Mammary epithelial cell (primary cell): ENCODE measurements at regions of chr4 and their contacts with region 1.

Region 1: GRCh38 chr4:112636688-112637551 is at the starts of genes LARP7 and ZGRF1:
- DNase-seq: peak; percentile 99
- H3K4me3 ChIP-seq: peak within 1 kb of the TSS; percentile 82 to 99 (median 97)
- H3K27ac ChIP-seq: peak within 1 kb of the TSS; percentile 91
- H3K4me1 ChIP-seq: peaks cover 8% of the 10 kb centered on the region
- H3K27me3 ChIP-seq: no peaks in the 10 kb centered on the region
- CTCF ChIP-seq: peak; percentile 77 to 93
- total RNA-seq, gene LARP7: 16.8 to 34.9 TPM
- total RNA-seq, gene ZGRF1: 3.3 to 10.3 TPM

Region 2: DNA sequence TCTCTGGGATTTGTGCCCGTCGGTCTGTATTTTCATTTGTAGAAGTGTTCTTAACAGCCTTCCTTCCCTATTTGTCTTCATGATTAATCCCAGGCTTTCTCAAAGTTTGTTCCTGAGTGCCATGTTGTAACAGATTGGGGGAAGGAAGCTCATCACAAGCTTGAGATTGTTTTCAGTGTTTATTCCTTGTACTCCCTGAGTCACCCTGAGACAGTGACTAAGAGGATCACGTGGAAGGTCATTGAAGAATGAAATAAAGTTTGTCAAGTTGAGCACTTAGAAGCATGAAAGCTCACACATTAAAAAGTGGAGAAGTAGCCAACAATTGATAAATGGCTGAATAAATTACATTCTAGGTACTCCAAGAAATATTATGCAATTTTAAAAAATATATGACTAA is 645.1 kb before region 1 on chr4:
- CTCF ChIA-PET with region 1: no interaction called
- dilution Hi-C with region 1: no loop called
- in situ Hi-C with region 1: no loop called
- intact Hi-C with region 1: no loop called
- DNase-seq: peak; percentile 81
- H3K4me3 ChIP-seq: no peak overlapping the region
- H3K27ac ChIP-seq: peak overlapping the region; percentile 5
- H3K4me1 ChIP-seq: peaks cover 11% of the 10 kb centered on the region
- H3K27me3 ChIP-seq: peaks cover 6% of the 10 kb centered on the region
- CTCF ChIP-seq: no peak

Region 3: GRCh38 chr4:112585977-112586736 is 50.8 kb before region 1 on chr4:
- CTCF ChIA-PET with region 1: no interaction called
- dilution Hi-C with region 1: no loop called
- in situ Hi-C with region 1: no loop called
- intact Hi-C with region 1: no loop called
- DNase-seq: no peak
- H3K4me3 ChIP-seq: no peak overlapping the region
- H3K27ac ChIP-seq: no peak overlapping the region
- H3K4me1 ChIP-seq: peaks cover 4% of the 10 kb centered on the region
- H3K27me3 ChIP-seq: no peaks in the 10 kb centered on the region
- CTCF ChIP-seq: no peak

Region 4: GRCh38 chr4:112765317-112765975 is 128.5 kb after region 1 on chr4:
- CTCF ChIA-PET with region 1: no interaction called
- dilution Hi-C with region 1: no loop called
- in situ Hi-C with region 1: loop called (anchors 10 kb)
- intact Hi-C with region 1: loop called (anchors 1 kb)
- DNase-seq: no peak
- H3K4me3 ChIP-seq: no peak overlapping the region
- H3K27ac ChIP-seq: no peak overlapping the region
- H3K4me1 ChIP-seq: no peaks in the 10 kb centered on the region
- H3K27me3 ChIP-seq: peaks cover 2% of the 10 kb centered on the region
- CTCF ChIP-seq: peak; percentile 28 to 47

Region 5: GRCh38 chr4:112853662-112854256 is 216.8 kb after region 1 on chr4:
- CTCF ChIA-PET with region 1: no interaction called
- dilution Hi-C with region 1: no loop called
- in situ Hi-C with region 1: no loop called
- intact Hi-C with region 1: loop called (anchors 5 kb)
- DNase-seq: no peak
- H3K4me3 ChIP-seq: no peak overlapping the region
- H3K27ac ChIP-seq: no peak overlapping the region
- H3K4me1 ChIP-seq: peaks cover 20% of the 10 kb centered on the region
- H3K27me3 ChIP-seq: no peaks in the 10 kb centered on the region
- CTCF ChIP-seq: peak; percentile 43 to 62

Region 6: DNA sequence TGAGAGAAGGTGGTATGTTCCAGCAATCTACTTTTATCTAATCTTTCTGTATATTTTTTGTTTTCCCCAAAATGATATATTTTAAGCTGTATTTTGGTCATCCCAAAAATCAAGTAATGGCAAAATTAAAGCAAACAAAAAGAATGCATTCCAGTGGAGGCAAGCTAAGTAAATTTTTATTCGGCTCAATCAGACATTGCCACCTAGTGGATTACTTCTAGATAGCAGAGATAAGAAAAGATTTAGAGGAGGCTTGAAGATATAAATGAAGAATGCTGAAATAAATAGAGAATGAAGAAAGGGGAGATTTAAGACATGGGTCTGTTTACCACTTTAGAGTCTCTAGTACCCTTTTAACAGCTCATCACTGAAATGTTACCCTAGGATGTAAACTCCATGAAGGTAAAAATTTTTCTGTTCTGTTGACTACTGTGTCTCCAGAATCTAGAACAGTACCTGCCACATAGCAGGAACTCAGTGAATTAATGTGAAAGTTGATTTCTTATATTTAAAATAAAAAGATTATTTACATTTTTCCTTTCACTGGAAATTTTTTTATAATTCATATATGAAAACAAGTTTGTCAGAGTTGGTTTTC is 301.6 kb after region 1 on chr4:
- CTCF ChIA-PET with region 1: no interaction called
- dilution Hi-C with region 1: no loop called
- in situ Hi-C with region 1: loop called (anchors 25 kb)
- intact Hi-C with region 1: loop called (anchors 1 kb)
- DNase-seq: peak; percentile 31
- H3K4me3 ChIP-seq: no peak overlapping the region
- H3K27ac ChIP-seq: no peak overlapping the region
- H3K4me1 ChIP-seq: no peaks in the 10 kb centered on the region
- H3K27me3 ChIP-seq: no peaks in the 10 kb centered on the region
- CTCF ChIP-seq: peak; percentile 77 to 78

Region 7: GRCh38 chr4:113117358-113117702 is 480.4 kb after region 1 on chr4:
- CTCF ChIA-PET with region 1: interaction called, 11 read pairs
- dilution Hi-C with region 1: no loop called
- in situ Hi-C with region 1: no loop called
- intact Hi-C with region 1: no loop called
- DNase-seq: no peak
- H3K4me3 ChIP-seq: no peak overlapping the region
- H3K27ac ChIP-seq: no peak overlapping the region
- H3K4me1 ChIP-seq: no peaks in the 10 kb centered on the region
- H3K27me3 ChIP-seq: peaks cover 19% of the 10 kb centered on the region
- CTCF ChIP-seq: no peak